GM10248 (cell line): ENCODE measurements at regions of chr2 and their contacts with region 1.

Region 1: GRCh38 chr2:20291106-20291564 is 59.5 kb downstream of the PUM2 start:
- DNase-seq: peak; percentile 34
- CTCF ChIP-seq: peak; percentile 37

Region 2: DNA sequence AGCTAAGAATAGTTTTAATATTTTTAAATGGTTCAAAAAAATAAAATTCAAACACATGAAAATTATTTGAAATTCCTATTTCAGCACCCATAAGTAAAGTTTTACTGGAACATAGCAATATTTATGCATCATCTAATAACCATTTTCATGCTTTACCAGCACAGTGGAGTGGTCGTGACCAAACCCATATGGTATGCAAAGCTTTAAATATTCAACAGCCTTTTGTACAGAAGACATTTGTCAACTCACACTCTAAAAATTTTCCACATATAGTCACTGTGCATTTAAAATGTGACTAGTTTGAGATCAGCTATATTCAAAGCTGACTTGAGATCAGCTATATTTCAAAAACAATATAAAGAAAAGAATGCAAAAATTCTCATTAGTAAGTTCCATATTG is 13.3 kb after region 1 on chr2:
- CTCF ChIA-PET with region 1: interaction called, 10 read pairs
- POLR2A ChIA-PET with region 1: no interaction called
- DNase-seq: no peak
- CTCF ChIP-seq: no peak

Region 3: GRCh38 chr2:20525041-20526035 is 234.2 kb after region 1 on chr2:
- CTCF ChIA-PET with region 1: no interaction called
- POLR2A ChIA-PET with region 1: no interaction called
- DNase-seq: peak; percentile 81
- CTCF ChIP-seq: peak; percentile 13